T-cell (primary cell): ENCODE measurements at regions of chr2 and their contacts with region 1.

Region 1: DNA sequence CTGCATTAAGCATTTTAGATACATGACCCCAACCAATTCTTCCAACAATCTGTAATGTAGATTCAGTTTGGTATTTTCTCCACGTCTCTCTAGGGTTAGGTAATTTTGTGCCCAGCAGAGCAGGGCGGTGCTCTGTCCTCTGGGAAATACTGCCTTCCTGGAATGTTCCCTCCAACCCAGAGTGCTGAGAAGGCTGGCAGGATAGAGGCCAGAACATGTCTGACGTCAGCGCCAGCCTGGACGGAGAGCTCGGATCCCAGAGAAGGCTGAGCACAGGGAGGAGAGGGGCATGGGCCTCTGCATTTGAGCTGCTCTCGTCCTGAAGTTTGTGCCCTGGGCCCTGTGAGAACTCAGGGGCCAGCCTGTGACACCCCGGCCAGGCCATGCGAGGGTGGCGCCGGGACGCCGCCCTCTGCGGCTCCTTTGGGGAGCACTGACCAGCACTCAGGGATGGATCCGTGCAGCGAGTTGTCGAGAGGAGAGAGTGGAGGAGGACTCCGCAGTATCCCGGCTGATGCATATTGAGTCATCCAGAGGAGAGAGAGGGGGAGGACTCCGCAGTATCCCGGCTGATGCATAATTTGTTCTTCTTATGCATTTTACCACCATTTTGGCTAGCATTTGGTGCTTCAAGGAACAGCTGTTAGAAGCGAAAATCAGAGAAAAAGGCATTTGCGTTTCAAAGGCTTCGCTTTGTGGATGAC is 80.0 kb upstream of the PXDN start:
- DNase-seq: no peak
- ATAC-seq: no peak
- H3K4me3 ChIP-seq: no peak overlapping the region
- H3K4me3 Mint-ChIP-seq: no peak overlapping the region
- H3K27ac ChIP-seq: no peak overlapping the region
- H3K27ac Mint-ChIP-seq: no peak overlapping the region
- H3K4me1 ChIP-seq: no peaks in the 10 kb centered on the region
- H3K4me1 Mint-ChIP-seq: no peaks in the 10 kb centered on the region
- H3K27me3 ChIP-seq: peaks cover 0 to 7% of the 10 kb centered on the region in 2 experiments
- H3K27me3 Mint-ChIP-seq: peaks cover 3 to 4% of the 10 kb centered on the region in 2 donors

Region 2: DNA sequence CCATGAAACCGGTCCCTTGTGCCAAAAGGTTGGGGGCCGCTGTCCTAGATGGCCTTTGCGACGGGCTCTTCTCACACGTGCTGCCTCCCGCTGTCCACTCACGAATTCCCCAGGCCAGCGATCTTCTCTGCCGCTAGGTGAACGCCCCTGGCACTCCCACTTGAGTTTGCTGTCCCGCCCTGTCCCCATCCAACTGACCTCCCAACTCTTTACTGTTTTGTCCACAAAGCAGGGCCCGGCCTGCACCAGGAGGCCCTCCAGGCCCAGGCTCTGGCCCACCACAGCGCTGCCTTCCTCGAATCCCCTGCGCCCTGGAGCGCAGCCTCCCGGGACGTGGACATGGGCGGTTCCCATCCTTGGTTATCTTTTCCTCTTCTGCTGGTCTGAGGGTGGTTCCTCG is 10.3 kb before region 1 on chr2:
- CTCF ChIA-PET with region 1: interaction called, 3 to 12 read pairs
- POLR2A ChIA-PET with region 1: no interaction called
- DNase-seq: no peak
- ATAC-seq: no peak
- H3K4me3 ChIP-seq: no peak overlapping the region
- H3K4me3 Mint-ChIP-seq: no peak overlapping the region
- H3K27ac ChIP-seq: no peak overlapping the region
- H3K27ac Mint-ChIP-seq: no peak overlapping the region
- H3K4me1 ChIP-seq: peaks cover 0 to 3% of the 10 kb centered on the region in 2 experiments
- H3K4me1 Mint-ChIP-seq: peaks cover 0 to 3% (median 3%) of the 10 kb centered on the region in 3 donors
- H3K27me3 ChIP-seq: peaks cover 0 to 14% of the 10 kb centered on the region in 2 experiments
- H3K27me3 Mint-ChIP-seq: peaks cover 0 to 13% of the 10 kb centered on the region in 2 donors